ENCODE measurements at regions of chr21 and their contacts with region 1.

Region 1: DNA sequence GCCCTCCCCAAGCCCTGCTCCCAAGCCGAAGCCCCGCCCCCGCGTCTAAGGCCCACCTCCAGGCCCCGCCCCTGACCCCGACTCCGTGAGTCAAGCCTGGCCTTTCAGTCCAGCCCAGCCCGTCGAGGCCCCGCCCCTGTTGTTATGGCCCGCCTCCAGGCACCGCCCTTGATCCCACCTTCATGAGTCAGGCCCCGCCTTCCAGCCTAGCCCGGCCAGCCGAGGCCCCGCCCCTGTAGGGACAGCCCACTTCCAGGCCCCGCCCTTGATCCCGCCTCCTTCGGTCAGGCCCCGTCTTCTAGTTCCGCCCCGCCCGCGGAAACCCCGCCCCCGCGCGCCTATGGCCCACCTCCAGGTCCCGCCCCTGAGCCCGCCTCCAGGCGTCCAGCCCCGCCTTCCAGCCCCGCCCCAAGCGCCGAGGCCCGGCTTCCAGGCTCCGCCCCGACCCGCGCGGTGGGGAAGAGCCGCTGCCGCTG is 247 bp upstream of the DOP1B start:
- DNase-seq: peak; percentile 100
- H3K4me3 Mint-ChIP-seq: peak overlapping the region; percentile 85
- H3K27ac Mint-ChIP-seq: no peak overlapping the region
- H3K4me1 Mint-ChIP-seq: peaks cover 23% of the 10 kb centered on the region
- H3K27me3 Mint-ChIP-seq: peaks cover 8% of the 10 kb centered on the region

Region 2: DNA sequence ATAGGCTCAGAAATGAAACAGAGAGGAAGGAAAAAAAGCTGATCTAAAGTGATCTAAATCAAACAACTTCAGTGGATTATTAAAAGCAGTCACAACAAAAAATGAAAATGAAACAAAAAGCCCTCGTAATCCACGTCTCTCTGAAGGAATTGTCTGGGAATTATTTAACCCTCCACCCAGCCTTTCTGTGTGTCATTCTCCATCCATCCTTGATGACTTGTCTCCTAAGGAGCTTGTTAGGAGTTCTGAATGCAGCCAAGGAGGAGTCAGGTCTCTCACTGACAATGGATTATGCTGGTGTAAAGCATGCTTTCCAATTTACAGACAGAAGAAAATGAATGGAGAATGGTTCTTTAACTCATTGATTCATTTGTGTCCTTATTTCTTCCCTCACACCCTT is 748.0 kb before region 1 on chr21:
- intact Hi-C with region 1: no loop called
- DNase-seq: no peak
- H3K4me3 Mint-ChIP-seq: no peak overlapping the region
- H3K27ac Mint-ChIP-seq: no peak overlapping the region
- H3K4me1 Mint-ChIP-seq: peaks cover 8% of the 10 kb centered on the region
- H3K27me3 Mint-ChIP-seq: peaks cover 10% of the 10 kb centered on the region

Region 3: DNA sequence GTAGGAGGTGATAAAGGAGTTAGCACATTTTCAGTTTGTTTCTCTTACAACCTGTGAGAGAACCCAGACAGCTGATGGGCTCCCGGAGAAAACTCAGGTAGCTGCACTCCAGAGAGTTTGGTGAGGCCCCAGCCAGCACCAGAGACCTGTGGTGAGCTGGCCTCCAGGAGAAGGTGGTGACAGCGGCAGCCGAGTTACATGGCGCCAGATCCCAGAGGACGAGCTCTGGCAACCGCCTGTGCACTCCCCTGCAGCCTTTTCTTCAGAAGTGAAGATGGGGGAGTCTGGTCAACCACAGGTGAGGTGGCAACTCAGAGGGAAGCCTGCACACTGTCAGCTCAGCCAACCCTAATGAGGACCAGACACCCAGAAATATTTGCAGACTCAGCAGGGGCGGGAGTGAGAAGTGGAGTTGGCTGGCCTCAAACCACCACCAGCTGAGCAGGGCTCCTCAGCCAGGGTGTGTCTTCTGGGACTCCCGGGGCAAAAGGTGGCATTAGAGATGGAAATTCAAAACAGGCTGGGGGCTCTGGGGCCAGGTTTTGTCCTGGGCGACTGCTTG is 305.8 kb before region 1 on chr21:
- intact Hi-C with region 1: no loop called
- DNase-seq: no peak
- H3K4me3 Mint-ChIP-seq: no peak overlapping the region
- H3K27ac Mint-ChIP-seq: no peak overlapping the region
- H3K4me1 Mint-ChIP-seq: no peaks in the 10 kb centered on the region
- H3K27me3 Mint-ChIP-seq: peaks cover 1% of the 10 kb centered on the region

Region 4: GRCh38 chr21:36135391-36136102 is 20.8 kb before region 1 on chr21:
- intact Hi-C with region 1: loop called (anchors 2 kb)
- DNase-seq: peak; percentile 93
- H3K4me3 Mint-ChIP-seq: peak overlapping the region; percentile 95
- H3K27ac Mint-ChIP-seq: peak overlapping the region; percentile 97
- H3K4me1 Mint-ChIP-seq: peaks cover 25% of the 10 kb centered on the region
- H3K27me3 Mint-ChIP-seq: peaks cover 4% of the 10 kb centered on the region

Region 5: GRCh38 chr21:36169436-36170128 is 13.2 kb after region 1 on chr21:
- intact Hi-C with region 1: loop called (anchors 1 kb)
- DNase-seq: peak; percentile 60
- H3K4me3 Mint-ChIP-seq: no peak overlapping the region
- H3K27ac Mint-ChIP-seq: no peak overlapping the region
- H3K4me1 Mint-ChIP-seq: peaks cover 10% of the 10 kb centered on the region
- H3K27me3 Mint-ChIP-seq: no peaks in the 10 kb centered on the region

Region 6: DNA sequence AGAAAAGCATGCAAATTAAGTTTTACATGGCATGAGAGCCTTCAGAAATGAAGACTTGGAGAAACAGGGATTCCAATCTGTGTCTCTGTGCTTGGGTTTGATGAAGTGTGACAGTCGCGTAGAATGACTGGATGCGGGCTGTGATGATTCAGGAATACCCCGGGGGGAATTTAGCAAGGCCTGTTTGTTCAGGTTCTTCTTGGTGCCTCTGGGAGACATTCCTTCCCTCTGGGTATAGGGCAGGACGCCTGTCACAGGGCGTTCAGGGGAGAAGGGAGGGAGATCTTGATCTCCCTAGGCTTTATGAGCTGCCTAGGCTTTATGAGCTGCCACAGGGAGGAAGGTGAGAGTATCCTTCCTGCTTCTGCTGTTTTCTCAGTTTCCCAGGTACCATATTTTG is 36.8 kb after region 1 on chr21:
- intact Hi-C with region 1: no loop called
- DNase-seq: no peak
- H3K4me3 Mint-ChIP-seq: no peak overlapping the region
- H3K27ac Mint-ChIP-seq: no peak overlapping the region
- H3K4me1 Mint-ChIP-seq: peaks cover 5% of the 10 kb centered on the region
- H3K27me3 Mint-ChIP-seq: peaks cover 2% of the 10 kb centered on the region

Region 7: DNA sequence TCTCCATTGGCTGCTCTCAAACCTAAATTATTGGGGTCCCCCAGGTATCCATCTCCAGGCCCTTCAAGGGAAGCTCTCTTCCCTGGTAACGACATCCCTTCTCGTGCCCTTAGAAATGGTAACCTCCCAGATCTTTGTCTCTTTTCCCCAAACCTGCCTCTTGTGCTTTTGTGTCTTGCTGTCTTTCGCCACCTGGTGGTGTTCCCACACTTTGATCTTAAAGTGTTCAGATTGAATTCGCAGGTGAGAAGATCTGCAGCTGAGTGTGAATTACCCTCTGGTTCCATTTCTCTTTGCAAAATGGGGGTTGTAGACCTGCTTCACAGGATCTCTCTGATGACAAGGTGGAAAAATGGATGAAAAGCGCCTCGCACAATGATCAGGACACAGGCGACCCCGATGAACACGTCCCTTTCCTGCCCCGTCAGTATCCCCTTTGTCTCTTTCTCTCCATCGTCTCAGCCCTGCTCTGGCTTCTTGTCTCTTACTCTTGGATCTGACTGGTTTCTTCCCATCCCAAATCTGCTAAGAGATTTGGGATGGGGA is 53.3 kb after region 1 on chr21:
- intact Hi-C with region 1: loop called (anchors 2 kb)
- DNase-seq: peak; percentile 87
- H3K4me3 Mint-ChIP-seq: no peak overlapping the region
- H3K27ac Mint-ChIP-seq: no peak overlapping the region
- H3K4me1 Mint-ChIP-seq: peaks cover 22% of the 10 kb centered on the region
- H3K27me3 Mint-ChIP-seq: no peaks in the 10 kb centered on the region

Region 8: GRCh38 chr21:36246080-36246631 is 89.8 kb after region 1 on chr21:
- intact Hi-C with region 1: no loop called
- DNase-seq: no peak
- H3K4me3 Mint-ChIP-seq: no peak overlapping the region
- H3K27ac Mint-ChIP-seq: no peak overlapping the region
- H3K4me1 Mint-ChIP-seq: peaks cover 8% of the 10 kb centered on the region
- H3K27me3 Mint-ChIP-seq: no peaks in the 10 kb centered on the region

Region 9: GRCh38 chr21:36260030-36260787 is 103.8 kb after region 1 on chr21:
- intact Hi-C with region 1: loop called (anchors 2 kb)
- DNase-seq: peak; percentile 90
- H3K4me3 Mint-ChIP-seq: peak overlapping the region; percentile 79
- H3K27ac Mint-ChIP-seq: peak overlapping the region; percentile 82
- H3K4me1 Mint-ChIP-seq: peaks cover 17% of the 10 kb centered on the region
- H3K27me3 Mint-ChIP-seq: no peaks in the 10 kb centered on the region

Region 10: GRCh38 chr21:36330904-36331303 is 174.5 kb after region 1 on chr21:
- intact Hi-C with region 1: loop called (anchors 1 kb)
- DNase-seq: peak; percentile 83
- H3K4me3 Mint-ChIP-seq: no peak overlapping the region
- H3K27ac Mint-ChIP-seq: peak overlapping the region; percentile 31
- H3K4me1 Mint-ChIP-seq: peaks cover 27% of the 10 kb centered on the region
- H3K27me3 Mint-ChIP-seq: no peaks in the 10 kb centered on the region

Region 11: DNA sequence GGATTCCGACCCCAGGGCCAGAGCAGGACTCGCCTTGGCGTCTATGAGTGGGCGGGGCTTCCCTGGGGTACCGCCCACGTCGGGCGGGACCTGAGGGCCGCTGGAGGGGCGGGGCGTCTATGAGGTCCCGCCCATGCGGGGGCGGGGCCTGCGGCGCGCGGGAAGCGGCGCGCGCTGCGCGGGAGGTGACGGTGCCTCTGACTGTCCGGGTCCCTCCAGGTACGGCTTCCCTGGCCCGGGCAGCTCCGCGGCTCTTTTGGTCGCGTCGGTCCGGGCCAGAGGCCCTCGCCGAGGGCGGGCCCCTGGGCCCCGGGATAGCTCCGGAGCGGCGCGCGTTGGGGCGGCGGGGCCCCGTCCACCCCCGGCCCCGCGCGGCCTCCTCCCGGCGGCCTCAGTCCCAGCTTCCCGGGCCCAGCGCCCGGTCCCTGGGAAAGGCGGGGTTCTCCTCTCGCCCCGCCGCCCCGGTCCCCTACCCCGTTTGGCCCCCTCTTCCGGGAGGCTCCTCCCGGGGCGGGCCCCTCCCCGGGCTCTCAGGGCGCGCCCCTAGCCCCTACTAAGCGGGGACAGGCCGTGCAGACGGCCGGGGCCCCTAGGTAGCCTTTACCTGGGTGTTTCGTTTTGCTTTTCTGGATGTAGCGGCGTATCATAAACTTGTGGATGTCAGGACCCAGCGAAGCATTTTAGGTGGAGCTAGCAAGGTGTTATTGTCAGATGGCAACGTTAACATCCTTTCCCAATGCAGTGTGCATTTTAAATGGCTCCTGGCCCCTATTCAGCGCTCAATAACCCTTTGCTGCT is 229.1 kb after region 1 on chr21 and contains the start of gene CHAF1B:
- intact Hi-C with region 1: loop called (anchors 1 kb)
- DNase-seq: peak; percentile 96
- H3K4me3 Mint-ChIP-seq: peak within 1 kb of the TSS; percentile 84
- H3K27ac Mint-ChIP-seq: peak within 1 kb of the TSS; percentile 71
- H3K4me1 Mint-ChIP-seq: peaks cover 19% of the 10 kb centered on the region
- H3K27me3 Mint-ChIP-seq: no peaks in the 10 kb centered on the region
- total RNA-seq, gene CHAF1B: 33.4 and 36.5 TPM in 2 replicates

Measured in activated CD4-positive, alpha-beta T cell treated with anti-CD3 and anti-CD28 coated beads, Interleukin-2, amount 10 ng/mL, durations not matched to agents 24 days and 14 days (primary cell).